Activated B cell treated with CpG ODN at 0.5 μM for 24 hours (primary cell): ENCODE measurements at regions of chr11 and their contacts with region 1.

Region 1: GRCh38 chr11:62081378-62082291 is 42.2 kb upstream of the INCENP start:
- DNase-seq: peak; percentile 65
- ATAC-seq: peak; percentile 82
- H3K4me3 Mint-ChIP-seq: peak overlapping the region; percentile 5
- H3K27ac Mint-ChIP-seq: no peak overlapping the region
- H3K4me1 Mint-ChIP-seq: peaks cover 7% of the 10 kb centered on the region
- H3K27me3 Mint-ChIP-seq: no peaks in the 10 kb centered on the region
- CTCF ChIP-seq: peak; percentile 59

Region 2: DNA sequence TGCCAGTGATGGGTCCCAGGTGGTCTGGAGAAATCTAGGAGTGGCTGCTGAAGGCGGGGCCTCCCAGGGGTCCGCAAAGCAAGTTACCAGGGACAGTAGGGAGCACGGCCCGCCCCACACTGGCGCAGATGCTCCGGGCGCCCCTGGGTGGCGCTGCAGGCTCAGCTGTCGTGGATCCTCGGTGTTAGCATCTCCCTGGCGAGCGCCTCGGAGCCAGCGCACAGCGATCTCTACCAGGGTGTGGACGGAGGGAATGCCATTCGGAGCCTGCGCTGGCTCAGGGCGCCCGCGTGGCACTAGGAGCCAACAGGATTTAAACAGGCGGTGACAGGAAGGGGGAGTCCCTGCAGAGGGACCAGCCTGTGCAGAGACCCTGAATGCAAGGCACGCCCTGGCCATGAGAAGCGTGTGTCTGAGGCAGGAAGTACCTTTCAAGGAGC is 210.5 kb before region 1 on chr11:
- CTCF ChIA-PET with region 1: interaction called, 104 read pairs
- POLR2A ChIA-PET with region 1: interaction called, 8 read pairs
- intact Hi-C with region 1: loop called (anchors 1 kb)
- DNase-seq: peak; percentile 76
- ATAC-seq: peak; percentile 95
- H3K4me3 Mint-ChIP-seq: peak overlapping the region; percentile 75
- H3K27ac Mint-ChIP-seq: peak overlapping the region; percentile 46
- H3K4me1 Mint-ChIP-seq: peaks cover 10% of the 10 kb centered on the region
- H3K27me3 Mint-ChIP-seq: no peaks in the 10 kb centered on the region
- CTCF ChIP-seq: peak; percentile 89

Region 3: DNA sequence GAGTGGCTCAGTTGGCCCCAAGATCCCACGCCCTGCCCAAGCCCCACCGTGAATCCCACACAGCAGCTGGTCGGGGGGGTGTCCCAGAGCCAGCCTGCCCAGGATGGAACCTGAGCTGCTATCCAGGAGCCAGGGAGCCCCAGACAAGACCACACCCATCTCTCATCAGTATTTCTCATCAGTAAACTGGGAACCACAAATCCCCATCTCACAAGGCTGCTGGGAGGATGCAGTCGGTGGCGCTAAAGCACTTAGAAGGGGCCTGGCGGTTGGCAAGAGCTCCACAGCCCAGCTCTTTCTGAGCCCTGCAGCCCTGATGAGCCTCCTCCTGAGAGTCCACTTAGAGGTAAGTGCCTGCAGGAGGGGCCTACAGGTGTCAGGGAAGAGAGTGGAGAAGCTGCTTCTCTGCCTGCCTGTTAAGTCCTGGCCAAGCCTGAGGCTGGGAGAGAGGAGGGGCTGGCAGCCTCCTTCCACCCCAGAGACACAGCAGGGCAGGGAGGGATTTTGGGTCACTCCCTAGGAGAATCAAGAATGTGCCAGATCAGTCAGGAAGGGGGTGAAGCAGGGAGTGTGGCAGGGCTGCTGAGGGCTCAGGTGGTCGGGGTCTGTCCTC is 196.4 kb before region 1 on chr11:
- CTCF ChIA-PET with region 1: interaction called, 298 read pairs
- POLR2A ChIA-PET with region 1: no interaction called
- intact Hi-C with region 1: no loop called
- DNase-seq: no peak
- ATAC-seq: no peak
- H3K4me3 Mint-ChIP-seq: no peak overlapping the region
- H3K27ac Mint-ChIP-seq: no peak overlapping the region
- H3K4me1 Mint-ChIP-seq: peaks cover 54% of the 10 kb centered on the region
- H3K27me3 Mint-ChIP-seq: no peaks in the 10 kb centered on the region
- CTCF ChIP-seq: no peak

Region 4: GRCh38 chr11:61947486-61948210 is 134.0 kb before region 1 on chr11:
- CTCF ChIA-PET with region 1: interaction called, 118 read pairs
- POLR2A ChIA-PET with region 1: interaction called, 11 read pairs
- intact Hi-C with region 1: loop called (anchors 1 kb)
- DNase-seq: peak; percentile 51
- ATAC-seq: peak; percentile 92
- H3K4me3 Mint-ChIP-seq: no peak overlapping the region
- H3K27ac Mint-ChIP-seq: no peak overlapping the region
- H3K4me1 Mint-ChIP-seq: peaks cover 11% of the 10 kb centered on the region
- H3K27me3 Mint-ChIP-seq: no peaks in the 10 kb centered on the region
- CTCF ChIP-seq: peak; percentile 35

Region 5: DNA sequence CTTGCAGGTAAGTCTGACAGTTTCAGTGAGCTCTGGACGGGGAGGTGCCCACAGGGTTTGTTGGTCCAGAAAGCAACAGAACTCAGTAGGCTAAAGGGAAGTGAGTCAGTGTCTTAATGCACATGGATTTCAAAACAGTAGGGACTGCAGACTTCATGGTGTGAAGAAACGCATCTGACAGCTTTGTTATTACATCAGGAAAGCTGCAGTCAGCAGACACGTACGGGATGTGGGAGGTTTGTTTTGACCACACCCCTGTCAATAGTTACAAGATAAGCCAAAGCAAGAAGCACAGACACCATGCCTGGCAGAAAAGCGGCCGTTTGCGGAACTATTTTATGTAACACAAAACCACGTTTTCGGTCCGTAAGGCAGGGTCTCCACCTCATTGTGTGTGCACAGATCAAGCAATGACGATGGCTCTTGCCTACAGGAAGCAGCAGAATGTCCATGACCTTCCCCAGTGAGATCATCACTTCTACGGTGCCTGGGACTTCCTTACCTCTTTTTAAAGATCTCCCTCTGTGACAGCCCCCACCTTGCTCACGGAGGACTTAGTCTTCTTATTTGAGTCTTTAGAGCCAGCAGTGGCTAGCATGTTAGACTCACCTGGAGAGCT is 56.0 kb before region 1 on chr11:
- CTCF ChIA-PET with region 1: interaction called, 4 read pairs
- POLR2A ChIA-PET with region 1: no interaction called
- intact Hi-C with region 1: loop called (anchors 5 kb)
- DNase-seq: peak; percentile 34
- ATAC-seq: peak; percentile 79
- H3K4me3 Mint-ChIP-seq: peak overlapping the region; percentile 62
- H3K27ac Mint-ChIP-seq: peak overlapping the region; percentile 85
- H3K4me1 Mint-ChIP-seq: peaks cover 18% of the 10 kb centered on the region
- H3K27me3 Mint-ChIP-seq: peaks cover 5% of the 10 kb centered on the region
- CTCF ChIP-seq: no peak

Region 6: DNA sequence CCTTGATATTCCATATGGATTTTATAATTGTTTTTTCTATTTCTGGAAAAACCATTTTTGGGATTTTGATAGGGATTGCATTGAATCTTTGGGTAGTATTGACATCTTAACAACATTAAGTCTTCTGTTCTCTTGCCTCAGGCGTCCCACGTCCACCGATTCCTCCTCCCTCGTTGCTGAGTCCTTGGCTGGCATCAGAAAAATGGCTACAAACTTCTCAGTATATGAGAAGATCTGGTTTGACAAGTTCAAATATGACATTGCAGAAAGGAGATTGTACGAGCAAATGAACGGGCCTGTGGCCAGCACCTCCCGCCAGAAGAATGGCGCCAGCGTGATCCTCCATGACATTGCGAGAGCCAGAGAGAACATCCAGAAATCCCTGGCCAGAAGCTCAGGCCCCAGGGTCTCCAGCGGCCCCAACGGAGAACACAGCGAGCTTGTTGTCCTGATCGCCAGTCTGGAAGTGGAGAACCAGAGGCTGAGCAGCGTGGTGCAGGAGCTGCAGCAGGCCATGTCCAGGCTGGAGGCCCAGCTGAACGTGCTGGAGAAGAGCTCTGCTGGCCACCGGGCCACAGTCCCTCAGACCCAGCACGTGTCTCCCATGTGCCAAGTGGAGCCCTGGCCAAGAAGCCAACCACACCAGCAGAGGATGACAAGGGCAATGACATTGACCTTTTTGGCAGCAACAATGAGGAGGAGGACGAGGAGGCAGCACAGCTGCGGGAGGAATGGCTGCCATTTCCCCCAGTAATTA is 87.6 kb after region 1 on chr11:
- CTCF ChIA-PET with region 1: no interaction called
- POLR2A ChIA-PET with region 1: no interaction called
- intact Hi-C with region 1: no loop called
- DNase-seq: no peak
- ATAC-seq: no peak
- H3K4me3 Mint-ChIP-seq: no peak overlapping the region
- H3K27ac Mint-ChIP-seq: no peak overlapping the region
- H3K4me1 Mint-ChIP-seq: peaks cover 2% of the 10 kb centered on the region
- H3K27me3 Mint-ChIP-seq: peaks cover 41% of the 10 kb centered on the region
- CTCF ChIP-seq: no peak